ENCODE measurements at regions of chr1 and their contacts with region 1.

Region 1: GRCh38 chr1:186178426-186179043 is 196.5 kb downstream of the TPR start:
- DNase-seq: no peak
- H3K4me3 ChIP-seq: no peak overlapping the region
- H3K27ac ChIP-seq: no peak overlapping the region
- H3K4me1 ChIP-seq: peaks cover 11% of the 10 kb centered on the region
- H3K27me3 ChIP-seq: no peaks in the 10 kb centered on the region
- CTCF ChIP-seq: no peak

Region 2: GRCh38 chr1:185348985-185349384 is 829.5 kb before region 1 on chr1:
- CTCF ChIA-PET with region 1: no interaction called
- POLR2A ChIA-PET with region 1: interaction called, 10 read pairs
- intact Hi-C with region 1: no loop called
- DNase-seq: no peak
- H3K4me3 ChIP-seq: no peak overlapping the region
- H3K27ac ChIP-seq: no peak overlapping the region
- H3K4me1 ChIP-seq: no peaks in the 10 kb centered on the region
- H3K27me3 ChIP-seq: no peaks in the 10 kb centered on the region
- CTCF ChIP-seq: no peak